SK-N-SH (cell line): ENCODE measurements at regions of chr16 and their contacts with region 1.

Region 1: GRCh38 chr16:4402439-4403132 is 13.8 kb downstream of the CORO7 start:
- DNase-seq: peak; percentile 96
- H3K4me3 ChIP-seq: peak overlapping the region in 1 of 2 experiments; percentile 50; a peak in 1 of 4 replicates
- H3K27ac ChIP-seq: no peak overlapping the region; a peak in 1 of 4 replicates
- H3K4me1 ChIP-seq: peaks cover 0 to 11% of the 10 kb centered on the region in 2 experiments; a peak in 1 of 4 replicates
- H3K27me3 ChIP-seq: no peaks in the 10 kb centered on the region
- CTCF ChIP-seq: peak; percentile 93
- EP300 ChIP-seq: no peak
- RAD21 ChIP-seq: peak; percentile 93

Region 2: GRCh38 chr16:4261557-4262172 is 140.9 kb before region 1 on chr16:
- CTCF ChIA-PET with region 1: interaction called, 23 read pairs
- POLR2A ChIA-PET with region 1: no interaction called
- DNase-seq: peak; percentile 78
- H3K4me3 ChIP-seq: no peak overlapping the region; a peak in 1 of 4 replicates
- H3K27ac ChIP-seq: no peak overlapping the region
- H3K4me1 ChIP-seq: peaks cover 6 to 23% of the 10 kb centered on the region in 2 experiments; a peak in 1 of 4 replicates
- H3K27me3 ChIP-seq: no peaks in the 10 kb centered on the region
- CTCF ChIP-seq: peak; percentile 68
- EP300 ChIP-seq: no peak
- RAD21 ChIP-seq: peak; percentile 55

Region 3: GRCh38 chr16:4288148-4288921 is 114.3 kb before region 1 on chr16:
- CTCF ChIA-PET with region 1: interaction called, 11 read pairs
- POLR2A ChIA-PET with region 1: no interaction called
- DNase-seq: peak; percentile 91
- H3K4me3 ChIP-seq: no peak overlapping the region
- H3K27ac ChIP-seq: no peak overlapping the region
- H3K4me1 ChIP-seq: peaks cover 0 to 10% of the 10 kb centered on the region in 2 experiments; a peak in 1 of 4 replicates
- H3K27me3 ChIP-seq: no peaks in the 10 kb centered on the region
- CTCF ChIP-seq: peak; percentile 95
- EP300 ChIP-seq: no peak
- RAD21 ChIP-seq: peak; percentile 83

Region 4: DNA sequence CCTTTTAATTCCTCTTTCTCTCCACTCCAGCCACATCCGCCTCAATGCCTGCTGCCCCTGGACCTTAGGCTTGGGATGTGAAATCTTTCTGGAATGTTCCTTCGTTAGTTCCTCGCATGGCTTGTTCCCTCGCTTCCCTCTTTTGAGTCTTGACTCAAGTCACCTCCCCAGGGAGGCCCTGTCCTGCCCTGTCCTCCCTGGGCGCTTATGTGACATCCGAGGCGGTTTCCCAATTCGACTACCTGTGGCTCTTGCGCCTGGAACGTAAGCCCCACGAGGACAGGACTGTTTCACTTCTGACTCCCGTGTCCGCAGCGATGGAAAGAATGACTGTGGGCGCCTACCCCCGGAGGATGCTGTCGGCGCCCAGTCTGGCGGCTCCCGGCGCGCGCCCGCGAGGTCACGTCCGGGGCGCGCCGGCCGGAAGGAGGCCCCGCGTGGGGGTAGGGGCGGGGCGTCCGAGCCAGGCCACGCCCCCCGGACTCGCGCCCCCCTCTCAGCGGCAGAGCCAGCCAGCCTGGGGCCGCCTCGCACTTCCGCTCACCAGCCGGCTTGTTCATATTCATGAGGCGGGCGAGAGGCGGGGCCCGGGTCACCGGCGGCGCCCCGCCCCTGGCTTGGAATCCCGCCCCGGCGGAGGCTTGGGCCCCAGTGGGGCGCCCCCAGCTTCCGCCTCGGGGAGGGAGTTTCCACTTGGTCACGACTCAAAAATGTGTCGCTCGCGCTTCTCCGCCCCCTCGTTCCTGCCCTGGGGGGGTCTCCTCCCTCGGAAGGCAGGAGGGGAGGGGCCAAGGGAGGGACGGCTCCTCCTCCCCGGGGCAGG is 95.2 kb before region 1 on chr16:
- CTCF ChIA-PET with region 1: interaction called, 13 read pairs
- POLR2A ChIA-PET with region 1: no interaction called
- DNase-seq: peak; percentile 99
- H3K4me3 ChIP-seq: peak overlapping the region; percentile 52 to 56
- H3K27ac ChIP-seq: peak overlapping the region; percentile 39 to 77; a peak in 3 of 4 replicates
- H3K4me1 ChIP-seq: peaks cover 0 to 16% of the 10 kb centered on the region in 2 experiments; a peak in 1 of 4 replicates
- H3K27me3 ChIP-seq: no peaks in the 10 kb centered on the region
- CTCF ChIP-seq: no peak
- EP300 ChIP-seq: no peak
- RAD21 ChIP-seq: no peak

Region 5: DNA sequence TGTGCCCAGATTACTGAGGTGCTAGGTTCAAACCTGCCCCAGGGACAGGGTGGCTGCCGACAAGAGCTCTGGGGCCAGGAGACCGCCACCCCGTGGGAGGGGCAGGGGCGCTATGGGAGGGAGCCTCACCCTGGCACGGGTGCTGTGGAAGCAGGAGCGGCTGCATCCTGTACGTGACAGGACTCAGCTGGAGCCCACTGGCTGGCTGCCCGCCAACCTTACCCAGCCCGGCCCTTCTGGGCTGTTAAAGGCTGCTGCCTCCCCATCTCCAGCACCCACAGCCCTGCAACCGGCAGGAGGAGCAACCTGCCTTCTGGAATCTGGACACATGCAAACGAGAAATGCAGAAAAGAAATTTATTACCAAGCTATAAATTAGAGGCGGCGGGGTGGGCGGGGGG is 62.7 kb before region 1 on chr16:
- CTCF ChIA-PET with region 1: interaction called, 205 read pairs
- POLR2A ChIA-PET with region 1: no interaction called
- DNase-seq: peak; percentile 88
- H3K4me3 ChIP-seq: no peak overlapping the region
- H3K27ac ChIP-seq: peak overlapping the region in 1 of 2 experiments; percentile 60; a peak in 1 of 4 replicates
- H3K4me1 ChIP-seq: peaks cover 0 to 21% of the 10 kb centered on the region in 2 experiments; a peak in 1 of 4 replicates
- H3K27me3 ChIP-seq: no peaks in the 10 kb centered on the region
- CTCF ChIP-seq: no peak
- EP300 ChIP-seq: no peak
- RAD21 ChIP-seq: peak; percentile 40; the same call in 1 of the 2 replicates

Region 6: DNA sequence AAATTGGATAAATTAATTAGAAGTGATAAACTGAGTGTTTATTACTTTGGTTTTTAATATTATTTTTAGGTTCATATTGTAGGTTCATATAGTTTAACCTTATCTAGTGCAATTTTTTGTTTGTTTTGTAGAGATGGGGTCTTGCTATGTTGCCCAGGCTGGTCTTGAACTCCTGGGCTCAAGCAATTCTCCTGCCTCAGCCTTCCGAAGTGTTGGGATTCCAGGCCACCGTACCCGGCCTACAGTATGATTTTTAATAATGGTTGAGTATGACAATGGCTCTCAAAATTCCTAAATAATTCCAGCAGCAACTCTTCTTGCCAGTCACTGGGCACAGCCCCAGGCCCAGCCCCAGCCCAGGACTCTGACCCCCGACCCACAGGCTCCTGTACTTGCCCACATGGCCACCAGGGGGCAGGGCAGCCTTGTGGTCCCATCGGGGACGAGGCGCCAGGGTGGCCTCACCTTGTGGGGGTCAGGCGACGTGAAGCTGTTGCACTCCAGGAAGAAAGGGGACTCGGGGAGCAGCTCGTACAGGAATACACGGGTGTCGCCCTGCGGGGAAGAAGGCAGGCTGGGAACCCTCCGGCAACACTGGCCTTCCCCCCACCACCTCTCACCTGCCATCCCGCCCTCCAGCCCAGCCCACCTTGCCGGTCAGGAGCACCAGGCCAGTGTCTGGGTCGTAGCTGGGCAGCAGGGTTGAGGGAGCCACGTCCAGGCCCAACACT is 43.6 kb before region 1 on chr16:
- CTCF ChIA-PET with region 1: interaction called, 558 read pairs
- POLR2A ChIA-PET with region 1: interaction called, 4 read pairs
- DNase-seq: peak; percentile 93
- H3K4me3 ChIP-seq: peak overlapping the region in 1 of 2 experiments; percentile 29; a peak in 1 of 4 replicates
- H3K27ac ChIP-seq: no peak overlapping the region
- H3K4me1 ChIP-seq: peaks cover 0 to 10% of the 10 kb centered on the region in 2 experiments; a peak in 1 of 4 replicates
- H3K27me3 ChIP-seq: no peaks in the 10 kb centered on the region
- CTCF ChIP-seq: peak; percentile 96
- EP300 ChIP-seq: no peak
- RAD21 ChIP-seq: peak; percentile 90

Region 7: GRCh38 chr16:4416200-4417032 is 13.8 kb after region 1 on chr16 and contains the start of gene CORO7:
- CTCF ChIA-PET with region 1: interaction called, 189 read pairs
- POLR2A ChIA-PET with region 1: no interaction called
- DNase-seq: peak; percentile 99
- H3K4me3 ChIP-seq: peak within 1 kb of the TSS; percentile 78 to 87
- H3K27ac ChIP-seq: peak within 1 kb of the TSS; percentile 20 to 58; a peak in 2 of 4 replicates
- H3K4me1 ChIP-seq: peaks cover 6 to 20% of the 10 kb centered on the region in 2 experiments; a peak in 1 of 4 replicates
- H3K27me3 ChIP-seq: no peaks in the 10 kb centered on the region
- CTCF ChIP-seq: no peak
- EP300 ChIP-seq: no peak
- RAD21 ChIP-seq: no peak
- polyA plus RNA-seq, gene CORO7: 21.9 and 25.8 TPM in 2 replicates